Calu3 (cell line): ENCODE measurements at regions of chr1 and their contacts with region 1.

Region 1: GRCh38 chr1:211382714-211383480 is 56.3 kb downstream of the TRAF5 start:
- DNase-seq: peak; percentile 93
- H3K4me3 Mint-ChIP-seq: peak overlapping the region; percentile 94
- H3K27ac Mint-ChIP-seq: peak overlapping the region; percentile 100
- H3K4me1 Mint-ChIP-seq: peaks cover 13% of the 10 kb centered on the region
- H3K27me3 Mint-ChIP-seq: no peaks in the 10 kb centered on the region
- CTCF ChIP-seq: no peak

Region 2: DNA sequence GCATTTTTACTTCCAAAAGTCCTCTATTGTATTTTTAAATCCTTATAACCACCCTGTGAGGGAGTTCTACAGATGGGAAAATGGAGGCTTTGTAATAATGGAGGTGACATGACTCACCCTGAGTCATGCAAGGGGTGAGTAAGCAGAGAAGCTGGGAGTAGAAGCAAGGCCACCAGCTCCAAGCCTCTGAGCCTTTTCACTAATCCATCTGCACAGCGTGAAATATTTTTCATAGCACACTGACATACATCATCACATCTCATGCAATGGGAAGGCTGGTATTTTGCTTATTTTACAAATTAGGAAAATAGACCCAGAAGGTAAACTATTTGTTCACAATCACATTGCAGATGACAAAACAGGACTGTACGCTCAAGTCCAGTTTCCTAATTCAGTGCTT is 345.8 kb before region 1 on chr1:
- CTCF ChIA-PET with region 1: interaction called, 11 read pairs
- intact Hi-C with region 1: no loop called
- DNase-seq: peak; percentile 62
- H3K4me3 Mint-ChIP-seq: no peak overlapping the region
- H3K27ac Mint-ChIP-seq: peak overlapping the region; percentile 75
- H3K4me1 Mint-ChIP-seq: peaks cover 12% of the 10 kb centered on the region
- H3K27me3 Mint-ChIP-seq: no peaks in the 10 kb centered on the region
- CTCF ChIP-seq: no peak

Region 3: GRCh38 chr1:211352985-211353515 is 29.8 kb before region 1 on chr1:
- CTCF ChIA-PET with region 1: no interaction called
- intact Hi-C with region 1: no loop called
- DNase-seq: peak; percentile 77
- H3K4me3 Mint-ChIP-seq: no peak overlapping the region
- H3K27ac Mint-ChIP-seq: no peak overlapping the region
- H3K4me1 Mint-ChIP-seq: peaks cover 18% of the 10 kb centered on the region
- H3K27me3 Mint-ChIP-seq: no peaks in the 10 kb centered on the region
- CTCF ChIP-seq: peak; percentile 92